CD4-positive, alpha-beta T cell (primary cell): ENCODE measurements at regions of chr19 and their contacts with region 1.

Region 1: GRCh38 chr19:39532233-39533002 is at the start of gene EID2B:
- DNase-seq: peak; percentile 87 to 99 (median 94)
- ATAC-seq: peak; percentile 95
- H3K4me3 ChIP-seq: peak within 1 kb of the TSS; percentile 79
- H3K4me3 Mint-ChIP-seq: peak within 1 kb of the TSS; percentile 96
- H3K27ac ChIP-seq: peak within 1 kb of the TSS in 1 of 2 donors; percentile 74
- H3K27ac Mint-ChIP-seq: peak within 1 kb of the TSS; percentile 86
- H3K4me1 ChIP-seq: peaks cover 15% of the 10 kb centered on the region
- H3K4me1 Mint-ChIP-seq: peaks cover 39% of the 10 kb centered on the region
- H3K27me3 ChIP-seq: no peaks in the 10 kb centered on the region
- H3K27me3 Mint-ChIP-seq: no peaks in the 10 kb centered on the region
- CTCF ChIP-seq: peak; percentile 97
- total RNA-seq, gene EID2B: 5.0 to 5.1 TPM

Region 2: DNA sequence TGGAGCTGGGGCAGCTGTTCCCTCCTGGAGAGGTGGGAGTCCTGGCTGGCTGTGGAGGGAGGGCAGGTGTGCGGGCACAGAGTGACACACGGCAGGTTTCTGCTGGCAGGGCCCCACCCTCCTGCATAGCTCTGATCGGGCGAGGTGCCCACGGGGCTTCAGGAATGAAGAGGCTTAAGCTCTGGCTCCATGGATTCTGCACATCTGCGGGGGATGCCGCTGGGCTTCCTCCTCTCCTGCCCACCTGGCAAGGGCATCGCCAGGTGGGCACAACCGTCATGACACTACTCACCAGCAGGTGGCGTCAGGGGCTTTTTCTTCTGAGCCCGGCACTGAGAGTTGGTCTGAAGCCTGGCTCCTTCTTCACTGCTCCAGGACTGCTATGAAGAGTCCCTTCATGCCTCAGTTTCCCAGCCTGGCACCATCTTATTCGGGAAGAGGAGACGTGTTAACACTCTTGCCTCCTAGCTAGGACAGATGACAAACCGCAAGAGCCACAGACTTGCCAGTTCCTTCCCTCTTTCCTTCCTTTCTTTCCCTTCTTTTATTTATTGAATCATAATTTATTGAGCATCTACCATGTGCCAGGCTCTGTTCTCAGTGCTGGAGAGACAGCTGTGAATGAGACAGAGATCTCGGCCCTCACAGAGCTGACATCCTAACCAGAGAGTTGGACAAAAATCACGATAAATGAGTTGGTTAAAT is 422.0 kb before region 1 on chr19:
- CTCF ChIA-PET with region 1: no interaction called
- POLR2A ChIA-PET with region 1: no interaction called
- intact Hi-C with region 1: loop called in 1 of 2 experiments (anchors 5 kb)
- DNase-seq: peak; percentile 53 to 84 (median 74)
- ATAC-seq: peak; percentile 77
- H3K4me3 ChIP-seq: no peak overlapping the region
- H3K4me3 Mint-ChIP-seq: no peak overlapping the region
- H3K27ac ChIP-seq: no peak overlapping the region
- H3K27ac Mint-ChIP-seq: no peak overlapping the region
- H3K4me1 ChIP-seq: peaks cover 4% of the 10 kb centered on the region
- H3K4me1 Mint-ChIP-seq: peaks cover 4% of the 10 kb centered on the region
- H3K27me3 ChIP-seq: no peaks in the 10 kb centered on the region
- H3K27me3 Mint-ChIP-seq: peaks cover 8% of the 10 kb centered on the region
- CTCF ChIP-seq: peak; percentile 80

Region 3: DNA sequence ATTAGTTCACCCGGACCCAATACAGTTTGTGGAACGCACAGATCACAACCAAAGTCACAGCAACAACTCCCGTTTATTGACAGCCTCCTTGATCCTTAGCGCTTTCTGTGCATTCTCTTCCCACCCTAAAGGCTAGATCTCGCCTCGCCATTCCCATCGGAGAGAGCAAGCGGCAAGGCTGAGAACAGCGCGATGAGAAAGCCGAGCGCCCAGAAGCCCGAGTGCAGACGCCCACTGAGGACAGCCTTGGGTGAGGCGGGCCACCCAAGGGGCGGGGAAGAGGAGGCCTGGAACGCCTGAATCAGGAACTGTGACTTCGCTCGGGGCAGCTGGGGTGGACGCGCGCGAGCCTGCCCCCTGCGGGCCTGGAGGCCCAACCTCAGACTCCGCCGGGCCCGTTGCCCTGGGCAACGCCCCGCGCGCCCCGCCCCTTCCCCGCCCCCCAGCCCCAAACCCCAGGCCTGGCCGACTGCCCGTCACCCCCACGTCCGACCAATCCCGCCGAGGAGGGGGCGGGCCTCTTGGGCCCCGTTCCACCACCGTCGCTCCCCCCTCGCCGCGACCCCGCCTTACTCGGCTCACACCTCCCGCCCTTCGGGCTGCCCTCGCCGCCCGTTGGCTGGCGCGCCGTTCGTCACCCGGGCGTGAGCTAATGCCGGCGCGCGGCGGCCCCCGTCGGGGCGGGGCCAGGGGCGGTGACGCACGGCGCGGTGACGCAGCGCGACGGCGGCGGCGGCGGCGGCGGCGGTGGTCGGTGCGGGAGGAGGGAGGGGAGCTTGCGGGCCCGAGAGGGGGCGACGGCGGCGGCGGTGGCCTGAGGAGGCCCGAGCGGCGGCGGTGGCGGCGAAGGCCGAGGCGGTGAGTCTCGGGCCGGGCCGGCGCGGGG is 190.5 kb before region 1 on chr19 and contains the start of gene SAMD4B:
- CTCF ChIA-PET with region 1: interaction called, 3 read pairs
- POLR2A ChIA-PET with region 1: interaction called, 4 read pairs
- intact Hi-C with region 1: loop called (anchors 5 to 10 kb)
- DNase-seq: peak; percentile 98 to 100 (median 99)
- ATAC-seq: peak; percentile 88
- H3K4me3 ChIP-seq: peak within 1 kb of the TSS; percentile 85
- H3K4me3 Mint-ChIP-seq: peak within 1 kb of the TSS; percentile 99
- H3K27ac ChIP-seq: peak within 1 kb of the TSS; percentile 65 to 82
- H3K27ac Mint-ChIP-seq: peak within 1 kb of the TSS; percentile 91
- H3K4me1 ChIP-seq: peaks cover 64% of the 10 kb centered on the region
- H3K4me1 Mint-ChIP-seq: peaks cover 77% of the 10 kb centered on the region
- H3K27me3 ChIP-seq: no peaks in the 10 kb centered on the region
- H3K27me3 Mint-ChIP-seq: no peaks in the 10 kb centered on the region
- CTCF ChIP-seq: peak; percentile 72
- total RNA-seq, gene SAMD4B: 65.0 to 66.9 TPM

Region 4: GRCh38 chr19:39397360-39398296 is 134.8 kb before region 1 on chr19:
- CTCF ChIA-PET with region 1: interaction called, 7 read pairs
- POLR2A ChIA-PET with region 1: interaction called, 3 read pairs
- intact Hi-C with region 1: loop called (anchors 5 kb)
- DNase-seq: peak; percentile 87 to 98 (median 94)
- ATAC-seq: peak; percentile 43
- H3K4me3 ChIP-seq: peak overlapping the region; percentile 31
- H3K4me3 Mint-ChIP-seq: peak overlapping the region; percentile 63
- H3K27ac ChIP-seq: peak overlapping the region; percentile 90 to 100
- H3K27ac Mint-ChIP-seq: peak overlapping the region; percentile 98
- H3K4me1 ChIP-seq: peaks cover 68% of the 10 kb centered on the region
- H3K4me1 Mint-ChIP-seq: peaks cover 54% of the 10 kb centered on the region
- H3K27me3 ChIP-seq: no peaks in the 10 kb centered on the region
- H3K27me3 Mint-ChIP-seq: no peaks in the 10 kb centered on the region
- CTCF ChIP-seq: peak; percentile 91

Region 5: GRCh38 chr19:39502640-39503417 is 29.6 kb before region 1 on chr19:
- CTCF ChIA-PET with region 1: interaction called, 13 read pairs
- POLR2A ChIA-PET with region 1: interaction called, 3 read pairs
- intact Hi-C with region 1: no loop called
- DNase-seq: peak; percentile 56 to 94 (median 72)
- ATAC-seq: peak; percentile 79
- H3K4me3 ChIP-seq: no peak overlapping the region
- H3K4me3 Mint-ChIP-seq: no peak overlapping the region
- H3K27ac ChIP-seq: no peak overlapping the region
- H3K27ac Mint-ChIP-seq: no peak overlapping the region
- H3K4me1 ChIP-seq: peaks cover 40% of the 10 kb centered on the region
- H3K4me1 Mint-ChIP-seq: peaks cover 48% of the 10 kb centered on the region
- H3K27me3 ChIP-seq: peaks cover 63 to 77% of the 10 kb centered on the region in 2 experiments
- H3K27me3 Mint-ChIP-seq: peaks cover 82% of the 10 kb centered on the region
- CTCF ChIP-seq: peak; percentile 68

Region 6: DNA sequence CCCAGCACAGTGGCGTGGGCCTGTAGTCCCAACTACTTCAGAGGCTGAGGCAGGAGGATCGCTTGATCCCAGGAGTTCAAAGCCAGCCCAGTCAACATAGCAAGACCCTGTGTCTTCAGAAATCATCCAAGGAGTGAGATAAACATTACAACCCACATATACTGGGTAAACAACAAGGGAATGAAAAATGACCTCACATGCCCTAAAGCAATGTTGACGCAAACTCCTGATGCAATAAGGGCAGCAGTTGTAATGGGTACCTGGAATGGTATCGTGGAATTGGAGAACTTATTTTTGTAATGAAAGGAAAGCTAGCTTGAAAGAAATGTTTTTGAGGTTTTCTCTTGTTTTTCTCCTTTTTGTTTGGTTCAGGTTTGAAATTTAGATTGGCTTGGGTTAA is 98.8 kb after region 1 on chr19:
- CTCF ChIA-PET with region 1: no interaction called
- POLR2A ChIA-PET with region 1: no interaction called
- intact Hi-C with region 1: no loop called
- DNase-seq: no peak
- ATAC-seq: no peak
- H3K4me3 ChIP-seq: no peak overlapping the region
- H3K4me3 Mint-ChIP-seq: no peak overlapping the region
- H3K27ac ChIP-seq: no peak overlapping the region
- H3K27ac Mint-ChIP-seq: no peak overlapping the region
- H3K4me1 ChIP-seq: no peaks in the 10 kb centered on the region
- H3K4me1 Mint-ChIP-seq: no peaks in the 10 kb centered on the region
- H3K27me3 ChIP-seq: peaks cover 4 to 5% of the 10 kb centered on the region in 2 experiments
- H3K27me3 Mint-ChIP-seq: peaks cover 50% of the 10 kb centered on the region
- CTCF ChIP-seq: no peak

Region 7: GRCh38 chr19:39679056-39679790 is 146.8 kb after region 1 on chr19:
- CTCF ChIA-PET with region 1: no interaction called
- POLR2A ChIA-PET with region 1: no interaction called
- intact Hi-C with region 1: no loop called
- DNase-seq: peak in 5 of 14 experiments; percentile 10 to 43 (median 24)
- ATAC-seq: peak; percentile 21
- H3K4me3 ChIP-seq: peak overlapping the region; percentile 22
- H3K4me3 Mint-ChIP-seq: peak overlapping the region; percentile 23
- H3K27ac ChIP-seq: peak overlapping the region in 1 of 2 donors; percentile 37
- H3K27ac Mint-ChIP-seq: peak overlapping the region; percentile 73
- H3K4me1 ChIP-seq: peaks cover 36% of the 10 kb centered on the region
- H3K4me1 Mint-ChIP-seq: peaks cover 27% of the 10 kb centered on the region
- H3K27me3 ChIP-seq: no peaks in the 10 kb centered on the region
- H3K27me3 Mint-ChIP-seq: peaks cover 2% of the 10 kb centered on the region
- CTCF ChIP-seq: no peak